Calu3 (cell line): ENCODE measurements at regions of chr14 and their contacts with region 1.

Region 1: DNA sequence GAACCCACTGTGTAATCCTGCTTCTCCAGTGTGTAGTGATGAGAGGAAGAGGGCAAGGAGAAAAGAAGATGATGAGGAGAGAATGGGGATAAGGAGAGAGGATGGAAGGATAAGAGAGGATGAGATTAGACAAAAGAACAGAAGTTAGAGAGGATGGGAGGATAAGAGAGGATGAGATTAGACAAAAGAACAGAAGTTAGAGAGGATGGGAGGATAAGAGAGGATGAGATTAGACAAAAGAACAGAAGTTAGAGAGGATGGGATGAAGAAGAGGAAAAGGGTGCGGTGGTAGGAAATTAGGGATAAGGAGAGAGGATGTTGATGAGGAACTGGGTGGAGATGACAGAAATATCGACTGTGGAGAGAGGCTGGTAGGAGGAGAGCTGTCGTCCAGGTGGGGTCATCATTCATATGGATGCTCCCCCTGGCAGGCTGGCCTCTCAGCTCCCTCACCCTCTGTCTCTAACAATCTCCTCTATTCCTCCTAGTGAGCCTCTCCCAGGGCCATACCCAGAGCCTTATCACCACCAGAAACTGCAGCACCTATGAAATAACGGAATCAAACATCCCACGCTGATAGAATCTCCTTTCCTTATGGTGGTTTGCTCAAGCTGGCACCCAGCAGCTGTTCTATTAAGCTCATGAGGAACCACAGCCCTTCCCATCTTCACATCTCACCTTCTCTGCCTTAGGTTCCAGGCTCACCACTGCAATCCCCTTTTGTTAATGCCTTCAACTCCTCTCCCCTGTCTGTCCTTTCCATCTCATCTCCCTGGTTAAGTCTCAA is 6.0 kb upstream of the CIROP start:
- DNase-seq: no peak
- H3K4me3 Mint-ChIP-seq: no peak overlapping the region
- H3K27ac Mint-ChIP-seq: no peak overlapping the region
- H3K4me1 Mint-ChIP-seq: peaks cover 12% of the 10 kb centered on the region
- H3K27me3 Mint-ChIP-seq: no peaks in the 10 kb centered on the region
- CTCF ChIP-seq: no peak

Region 2: GRCh38 chr14:22737052-22737451 is 373.7 kb before region 1 on chr14:
- CTCF ChIA-PET with region 1: no interaction called
- intact Hi-C with region 1: no loop called
- DNase-seq: no peak
- H3K4me3 Mint-ChIP-seq: no peak overlapping the region
- H3K27ac Mint-ChIP-seq: no peak overlapping the region
- H3K4me1 Mint-ChIP-seq: no peaks in the 10 kb centered on the region
- H3K27me3 Mint-ChIP-seq: peaks cover 11% of the 10 kb centered on the region
- CTCF ChIP-seq: no peak

Region 3: GRCh38 chr14:23034483-23035302 is 76.1 kb before region 1 on chr14 and contains the start of gene PSMB5:
- CTCF ChIA-PET with region 1: no interaction called
- intact Hi-C with region 1: no loop called
- DNase-seq: peak; percentile 82
- H3K4me3 Mint-ChIP-seq: peak within 1 kb of the TSS; percentile 95
- H3K27ac Mint-ChIP-seq: peak within 1 kb of the TSS; percentile 99
- H3K4me1 Mint-ChIP-seq: peaks cover 8% of the 10 kb centered on the region
- H3K27me3 Mint-ChIP-seq: no peaks in the 10 kb centered on the region
- CTCF ChIP-seq: no peak
- total RNA-seq, gene PSMB5: 121 and 138 TPM in 2 replicates

Region 4: DNA sequence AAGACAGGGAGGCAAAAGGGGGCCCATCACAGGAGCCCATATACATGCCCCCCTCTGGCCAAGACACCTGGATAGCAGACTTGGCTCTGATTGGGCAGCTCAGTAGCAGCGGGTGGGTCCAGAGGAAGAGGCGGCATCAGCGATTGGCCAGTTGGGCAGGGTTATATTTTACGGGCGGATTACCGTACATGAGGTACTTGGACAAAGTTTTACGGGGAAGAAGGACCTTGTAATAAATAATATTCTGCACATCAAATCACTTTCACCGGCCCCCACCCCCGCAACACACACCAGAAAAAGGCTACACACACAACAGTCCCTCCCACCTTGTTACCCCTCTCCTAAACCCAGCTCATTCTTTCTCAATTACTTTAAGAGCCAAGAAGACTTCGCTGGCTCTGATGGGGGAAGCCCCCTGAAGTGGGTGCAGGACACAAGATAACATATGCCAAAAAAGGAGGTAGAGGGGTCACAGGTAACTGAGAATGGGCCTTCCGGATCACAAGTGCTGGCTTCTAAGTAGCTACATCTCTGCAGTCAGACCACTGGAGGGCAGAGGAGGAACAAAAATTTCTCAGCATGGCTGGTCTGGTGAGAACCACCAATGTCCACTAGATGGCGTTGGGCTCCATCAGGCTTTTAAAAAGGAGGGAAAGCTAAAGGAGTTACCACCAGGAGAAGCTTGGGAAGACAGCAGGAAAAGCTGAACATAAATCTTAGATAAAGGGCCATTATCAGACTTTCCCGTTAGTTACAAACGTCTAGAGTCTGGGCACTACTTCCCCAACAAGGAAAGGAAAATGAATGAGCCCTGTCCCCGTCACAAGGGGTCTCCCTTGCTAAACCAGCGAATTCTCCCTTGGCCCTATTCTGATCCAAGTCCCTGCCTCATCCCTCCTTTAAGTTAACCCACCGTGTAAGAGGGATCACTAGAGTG is 42.0 kb before region 1 on chr14:
- CTCF ChIA-PET with region 1: interaction called, 11 read pairs
- intact Hi-C with region 1: no loop called
- DNase-seq: peak; percentile 82
- H3K4me3 Mint-ChIP-seq: no peak overlapping the region
- H3K27ac Mint-ChIP-seq: no peak overlapping the region
- H3K4me1 Mint-ChIP-seq: peaks cover 36% of the 10 kb centered on the region
- H3K27me3 Mint-ChIP-seq: no peaks in the 10 kb centered on the region
- CTCF ChIP-seq: peak; percentile 90